ENCODE measurements at regions of chr5 and their contacts with region 1.

Region 1: DNA sequence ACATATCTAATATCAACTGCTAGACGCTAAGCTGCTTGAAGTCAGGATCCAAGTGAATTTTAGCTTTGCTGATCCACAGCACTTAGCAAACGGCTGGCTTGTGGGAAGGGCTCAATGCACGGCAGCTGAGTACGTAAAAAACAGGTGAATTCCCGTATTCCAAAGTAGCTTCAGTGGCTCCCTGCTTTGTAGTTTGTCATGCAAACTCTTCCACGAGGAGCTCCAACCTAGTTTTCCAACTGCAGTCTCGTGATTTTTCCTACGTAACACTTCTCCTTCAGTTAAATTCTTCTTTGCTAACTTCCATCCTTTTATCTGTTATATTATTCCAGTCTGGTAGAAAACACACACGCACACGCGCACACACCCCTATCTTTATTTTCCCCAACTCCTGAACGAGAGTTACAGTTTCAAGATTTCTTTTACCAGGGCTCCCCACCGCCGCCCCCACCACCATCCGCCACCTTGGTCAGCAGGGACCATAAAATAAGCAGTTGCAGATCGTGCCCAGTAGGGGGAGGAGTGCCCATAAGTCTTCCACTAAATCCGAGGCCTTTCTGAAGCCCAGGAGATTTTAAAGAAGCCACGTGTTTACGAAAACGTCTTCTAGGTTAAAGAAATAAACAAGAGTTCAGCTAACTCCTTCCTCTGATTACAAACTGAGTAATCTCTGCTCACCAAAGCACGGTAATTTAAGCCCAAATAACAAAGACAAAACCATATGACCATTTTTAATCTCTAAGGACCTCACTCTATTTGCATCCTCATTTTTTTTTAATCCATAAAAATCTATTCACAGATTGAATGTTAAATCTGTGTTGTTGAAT is 34.8 kb upstream of the TRIO start:
- DNase-seq: peak in 4 of 5 donors; percentile 51 to 66 (median 58)
- ATAC-seq: peak; percentile 75 to 84 (median 80)
- H3K4me3 ChIP-seq: peak overlapping the region in 9 of 12 donors; percentile 19 to 43 (median 30)
- H3K27ac ChIP-seq: no peak overlapping the region
- H3K4me1 ChIP-seq: peaks cover 0 to 21% (median 5%) of the 10 kb centered on the region in 12 donors
- H3K27me3 ChIP-seq: no peaks in the 10 kb centered on the region
- CTCF ChIP-seq: peak; percentile 55 to 84 (median 78)
- POLR2A ChIP-seq: no peak

Region 2: DNA sequence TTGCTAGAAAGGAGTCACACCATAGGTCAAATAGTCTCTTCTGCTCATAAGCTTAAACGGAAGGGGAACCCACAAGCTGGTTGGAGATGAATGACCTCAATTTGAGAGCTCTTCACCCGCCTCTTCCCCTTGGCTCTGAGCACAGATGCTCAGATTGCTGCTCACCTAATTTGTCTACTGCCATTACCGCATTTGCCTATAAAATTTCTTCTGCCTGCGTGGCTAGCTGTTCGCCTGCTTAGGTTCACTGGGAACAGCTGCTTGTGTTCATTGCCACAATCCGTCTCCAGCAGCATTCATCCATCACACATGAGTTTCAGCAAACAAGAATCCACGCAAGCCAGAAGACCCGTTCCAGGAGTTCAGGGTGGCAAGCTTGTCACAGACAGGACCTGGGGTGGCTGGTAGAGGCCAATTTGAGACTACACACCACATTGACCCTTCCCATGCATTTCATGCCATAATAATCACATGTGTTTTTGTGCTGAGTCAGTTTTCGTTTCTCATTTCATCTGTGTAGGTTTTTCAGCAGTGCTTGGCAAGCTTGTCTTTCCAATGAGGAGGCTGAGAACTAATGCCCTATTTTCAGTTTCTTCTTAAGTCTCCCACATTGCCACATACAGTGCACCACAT is 113.6 kb before region 1 on chr5:
- intact Hi-C with region 1: loop called in 6 of 10 experiments (anchors 5 to 10 kb)
- DNase-seq: no peak
- ATAC-seq: no peak
- H3K4me3 ChIP-seq: no peak overlapping the region
- H3K27ac ChIP-seq: no peak overlapping the region
- H3K4me1 ChIP-seq: no peaks in the 10 kb centered on the region
- H3K27me3 ChIP-seq: peaks cover 0 to 4% (median 0%) of the 10 kb centered on the region in 9 donors
- CTCF ChIP-seq: no peak
- POLR2A ChIP-seq: no peak

Region 3: GRCh38 chr5:14156650-14157493 is 48.5 kb after region 1 on chr5:
- intact Hi-C with region 1: no loop called
- DNase-seq: peak in 2 of 5 donors; percentile 56 to 57
- ATAC-seq: peak; percentile 43 to 82 (median 74)
- H3K4me3 ChIP-seq: peak overlapping the region in 8 of 12 donors; percentile 18 to 45 (median 30)
- H3K27ac ChIP-seq: peak overlapping the region in 9 of 12 donors; percentile 17 to 87 (median 51)
- H3K4me1 ChIP-seq: peaks cover 25 to 76% (median 68%) of the 10 kb centered on the region in 12 donors
- H3K27me3 ChIP-seq: no peaks in the 10 kb centered on the region
- CTCF ChIP-seq: no peak
- POLR2A ChIP-seq: no peak

Region 4: GRCh38 chr5:14250084-14250695 is 141.8 kb after region 1 on chr5:
- intact Hi-C with region 1: no loop called
- DNase-seq: peak in 4 of 5 donors; percentile 66 to 77 (median 72)
- ATAC-seq: peak; percentile 83 to 91 (median 86)
- H3K4me3 ChIP-seq: peak overlapping the region in 7 of 12 donors; percentile 11 to 31 (median 25)
- H3K27ac ChIP-seq: peak overlapping the region; percentile 10 to 80 (median 70)
- H3K4me1 ChIP-seq: peaks cover 9 to 86% (median 57%) of the 10 kb centered on the region in 12 donors
- H3K27me3 ChIP-seq: no peaks in the 10 kb centered on the region
- CTCF ChIP-seq: no peak
- POLR2A ChIP-seq: no peak

Region 5: DNA sequence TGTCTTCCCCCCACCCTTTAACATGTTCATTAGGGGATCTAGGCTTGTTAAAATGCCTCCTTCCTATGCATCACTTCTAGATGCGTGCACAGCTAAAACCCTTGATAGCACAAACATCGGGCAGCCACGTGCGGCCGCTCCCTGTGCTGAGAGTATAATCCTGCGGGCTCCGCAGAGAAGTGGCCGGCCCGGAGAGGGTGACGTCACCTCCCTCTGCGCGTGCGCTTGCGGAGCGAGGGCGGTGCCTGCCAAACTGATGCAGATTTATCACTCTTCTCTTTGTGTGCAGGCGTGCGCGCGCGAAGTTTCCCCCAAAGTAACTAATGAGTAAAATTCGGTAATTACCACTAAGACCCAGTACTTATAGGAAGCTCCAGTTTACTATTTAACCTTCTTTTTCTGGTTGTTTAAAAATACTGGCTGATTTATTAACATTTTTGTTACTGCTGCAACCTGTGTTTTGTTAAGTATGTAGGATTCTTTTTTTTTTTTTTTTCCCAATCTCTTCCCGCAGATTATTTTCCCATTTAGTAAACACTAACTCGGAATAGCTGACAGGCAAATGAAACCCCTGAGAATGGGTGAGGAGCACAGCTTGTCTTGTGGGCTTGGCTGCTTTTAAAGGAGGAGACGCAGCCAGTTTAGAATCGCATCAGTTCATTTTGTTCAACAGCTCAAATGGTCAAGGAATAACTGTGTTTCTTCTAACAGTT is 156.4 kb after region 1 on chr5:
- intact Hi-C with region 1: loop called in 2 of 10 experiments (anchors 2 to 5 kb)
- DNase-seq: peak; percentile 89 to 95 (median 93)
- ATAC-seq: peak; percentile 89 to 95 (median 94)
- H3K4me3 ChIP-seq: peak overlapping the region in 9 of 12 donors; percentile 4 to 45 (median 27)
- H3K27ac ChIP-seq: peak overlapping the region in 6 of 12 donors; percentile 1 to 38 (median 10)
- H3K4me1 ChIP-seq: peaks cover 12 to 73% (median 49%) of the 10 kb centered on the region in 12 donors
- H3K27me3 ChIP-seq: no peaks in the 10 kb centered on the region
- CTCF ChIP-seq: no peak
- POLR2A ChIP-seq: peak in 1 of 2 donors; percentile 28

Region 6: DNA sequence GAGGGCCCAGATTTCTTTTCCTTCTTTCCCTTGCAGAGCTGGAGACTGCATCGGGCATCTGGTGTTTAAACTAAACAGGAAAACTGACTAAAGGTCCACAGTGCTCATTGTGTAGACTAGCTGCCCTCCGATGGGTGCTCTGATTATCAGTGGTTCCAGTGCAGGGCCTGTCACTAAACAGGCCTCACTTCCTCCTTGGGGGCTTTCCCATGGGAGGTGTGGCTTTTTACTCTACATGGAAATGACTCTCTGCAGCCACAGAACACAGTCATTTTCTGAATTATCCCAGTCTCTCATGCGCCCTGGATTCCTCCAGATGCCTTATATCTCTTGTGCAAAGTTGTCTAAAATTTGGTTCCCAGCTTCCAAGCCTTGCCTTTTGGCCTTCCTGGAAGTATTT is 233.9 kb after region 1 on chr5:
- intact Hi-C with region 1: loop called in 1 of 10 experiments (anchors 10 kb)
- DNase-seq: no peak
- ATAC-seq: peak in 3 of 4 donors; percentile 46 to 63 (median 61)
- H3K4me3 ChIP-seq: no peak overlapping the region
- H3K27ac ChIP-seq: peak overlapping the region in 1 of 12 donors; percentile 59
- H3K4me1 ChIP-seq: peaks cover 0 to 36% (median 2%) of the 10 kb centered on the region in 12 donors
- H3K27me3 ChIP-seq: no peaks in the 10 kb centered on the region
- CTCF ChIP-seq: no peak
- POLR2A ChIP-seq: no peak

Region 7: DNA sequence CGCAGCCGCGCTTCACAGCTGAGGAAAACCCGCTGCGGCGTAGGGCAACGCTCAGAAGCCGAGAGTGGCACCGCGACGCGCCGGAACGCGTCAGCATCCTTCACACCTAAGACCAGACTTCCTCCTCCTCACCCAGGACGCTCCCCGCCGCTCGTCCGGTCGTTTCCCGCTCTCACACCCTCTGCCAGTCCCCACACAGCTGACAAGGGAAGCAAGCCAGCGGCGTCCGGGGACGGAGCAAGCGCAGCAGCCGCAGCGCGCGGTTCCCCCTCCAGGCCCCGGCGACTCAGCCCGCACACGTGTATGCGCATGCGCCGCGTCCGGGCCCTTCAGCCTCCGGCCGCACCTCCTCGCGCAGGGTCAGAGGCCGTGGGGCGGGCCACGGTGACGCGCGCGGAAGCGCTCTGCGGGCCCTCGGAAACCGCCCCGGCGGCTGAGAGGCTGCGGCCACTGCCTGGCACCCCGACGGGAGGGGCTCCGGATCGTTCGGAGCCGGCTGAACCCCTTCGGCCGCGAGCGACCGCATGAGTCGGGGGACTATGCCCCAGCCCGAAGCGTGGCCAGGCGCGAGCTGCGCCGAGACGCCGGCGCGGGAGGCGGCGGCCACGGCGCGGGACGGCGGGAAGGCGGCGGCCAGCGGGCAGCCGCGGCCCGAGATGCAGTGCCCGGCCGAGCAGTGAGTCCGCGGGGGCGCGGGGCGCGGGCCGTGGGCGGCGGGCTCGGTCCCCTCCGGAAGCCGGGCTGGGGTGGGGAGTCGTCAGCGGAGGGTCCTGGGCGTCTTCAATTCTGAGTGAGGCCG is 556.1 kb after region 1 on chr5 and contains the start of gene OTULIN:
- intact Hi-C with region 1: loop called in 1 of 10 experiments (anchors 10 kb)
- DNase-seq: peak; percentile 92 to 97 (median 94)
- ATAC-seq: peak; percentile 93 to 98 (median 96)
- H3K4me3 ChIP-seq: peak within 1 kb of the TSS; percentile 46 to 88 (median 74)
- H3K27ac ChIP-seq: peak within 1 kb of the TSS; percentile 80 to 98 (median 91)
- H3K4me1 ChIP-seq: peaks cover 0 to 53% (median 40%) of the 10 kb centered on the region in 12 donors
- H3K27me3 ChIP-seq: no peaks in the 10 kb centered on the region
- CTCF ChIP-seq: no peak
- POLR2A ChIP-seq: peak; percentile 9 to 93
- total RNA-seq, gene OTULIN: 19.3 to 42.0 (median 27.5) TPM